GM12878 (cell line): ENCODE measurements at regions of chr6 and their contacts with region 1.

Region 1: GRCh38 chr6:22332711-22333110 is 35.9 kb upstream of the PRL start:
- DNase-seq: no peak
- ATAC-seq: peak; percentile 42
- H3K4me3 ChIP-seq: no peak overlapping the region
- H3K27ac ChIP-seq: no peak overlapping the region
- H3K4me1 ChIP-seq: no peaks in the 10 kb centered on the region
- H3K27me3 ChIP-seq: no peaks in the 10 kb centered on the region
- CTCF ChIP-seq: no peak
- EP300 ChIP-seq: no peak
- POLR2A ChIP-seq: no peak
- RAD21 ChIP-seq: no peak

Region 2: GRCh38 chr6:22320750-22321149 is 12.0 kb before region 1 on chr6:
- CTCF ChIA-PET with region 1: no interaction called
- POLR2A ChIA-PET with region 1: no interaction called
- RAD21 ChIA-PET with region 1: no interaction called
- SMC1A ChIA-PET with region 1: interaction called, 10 read pairs
- in situ Hi-C with region 1: no loop called
- intact Hi-C with region 1: no loop called
- DNase-seq: no peak
- ATAC-seq: no peak
- H3K4me3 ChIP-seq: no peak overlapping the region
- H3K27ac ChIP-seq: no peak overlapping the region
- H3K4me1 ChIP-seq: peaks cover 8% of the 10 kb centered on the region
- H3K27me3 ChIP-seq: no peaks in the 10 kb centered on the region
- CTCF ChIP-seq: no peak
- EP300 ChIP-seq: no peak
- POLR2A ChIP-seq: no peak
- RAD21 ChIP-seq: no peak

Region 3: GRCh38 chr6:22350109-22350508 is 17.4 kb after region 1 on chr6:
- CTCF ChIA-PET with region 1: interaction called, 4 read pairs
- POLR2A ChIA-PET with region 1: no interaction called
- RAD21 ChIA-PET with region 1: no interaction called
- SMC1A ChIA-PET with region 1: interaction called, 17 read pairs
- in situ Hi-C with region 1: no loop called
- intact Hi-C with region 1: no loop called
- DNase-seq: no peak
- ATAC-seq: no peak
- H3K4me3 ChIP-seq: no peak overlapping the region
- H3K27ac ChIP-seq: no peak overlapping the region
- H3K4me1 ChIP-seq: no peaks in the 10 kb centered on the region
- H3K27me3 ChIP-seq: no peaks in the 10 kb centered on the region
- CTCF ChIP-seq: no peak
- EP300 ChIP-seq: no peak
- POLR2A ChIP-seq: no peak
- RAD21 ChIP-seq: no peak